GM12878 (cell line): ENCODE measurements at regions of chr16 and their contacts with region 1.

Region 1: GRCh38 chr16:55711959-55712876 is 56.4 kb downstream of the SLC6A2 start:
- DNase-seq: no peak
- ATAC-seq: peak; percentile 94
- H3K4me3 ChIP-seq: no peak overlapping the region
- H3K27ac ChIP-seq: no peak overlapping the region
- H3K4me1 ChIP-seq: no peaks in the 10 kb centered on the region
- H3K27me3 ChIP-seq: no peaks in the 10 kb centered on the region
- CTCF ChIP-seq: peak; percentile 57 to 68 (median 63)
- EP300 ChIP-seq: no peak
- POLR2A ChIP-seq: no peak
- RAD21 ChIP-seq: peak; percentile 63

Region 2: GRCh38 chr16:55842369-55843104 is 130.3 kb after region 1 on chr16:
- CTCF ChIA-PET with region 1: interaction called, 37 read pairs
- POLR2A ChIA-PET with region 1: no interaction called
- RAD21 ChIA-PET with region 1: interaction called, 6 read pairs
- SMC1A ChIA-PET with region 1: interaction called, 5 read pairs
- in situ Hi-C with region 1: loop called (anchors 5 kb)
- intact Hi-C with region 1: loop called (anchors 1 kb)
- DNase-seq: no peak
- ATAC-seq: peak; percentile 78
- H3K4me3 ChIP-seq: no peak overlapping the region
- H3K27ac ChIP-seq: no peak overlapping the region
- H3K4me1 ChIP-seq: no peaks in the 10 kb centered on the region
- H3K27me3 ChIP-seq: no peaks in the 10 kb centered on the region
- CTCF ChIP-seq: peak; percentile 55 to 73 (median 58)
- EP300 ChIP-seq: no peak
- POLR2A ChIP-seq: no peak
- RAD21 ChIP-seq: peak; percentile 84